ENCODE measurements at regions of chr14 and their contacts with region 1.

Region 1: GRCh38 chr14:20613094-20614037 is 22.2 kb upstream of the RNASE12 start:
- DNase-seq: peak; percentile 83
- H3K4me3 Mint-ChIP-seq: no peak overlapping the region
- H3K27ac Mint-ChIP-seq: no peak overlapping the region
- H3K4me1 Mint-ChIP-seq: peaks cover 14% of the 10 kb centered on the region
- H3K27me3 Mint-ChIP-seq: peaks cover 2% of the 10 kb centered on the region

Region 2: DNA sequence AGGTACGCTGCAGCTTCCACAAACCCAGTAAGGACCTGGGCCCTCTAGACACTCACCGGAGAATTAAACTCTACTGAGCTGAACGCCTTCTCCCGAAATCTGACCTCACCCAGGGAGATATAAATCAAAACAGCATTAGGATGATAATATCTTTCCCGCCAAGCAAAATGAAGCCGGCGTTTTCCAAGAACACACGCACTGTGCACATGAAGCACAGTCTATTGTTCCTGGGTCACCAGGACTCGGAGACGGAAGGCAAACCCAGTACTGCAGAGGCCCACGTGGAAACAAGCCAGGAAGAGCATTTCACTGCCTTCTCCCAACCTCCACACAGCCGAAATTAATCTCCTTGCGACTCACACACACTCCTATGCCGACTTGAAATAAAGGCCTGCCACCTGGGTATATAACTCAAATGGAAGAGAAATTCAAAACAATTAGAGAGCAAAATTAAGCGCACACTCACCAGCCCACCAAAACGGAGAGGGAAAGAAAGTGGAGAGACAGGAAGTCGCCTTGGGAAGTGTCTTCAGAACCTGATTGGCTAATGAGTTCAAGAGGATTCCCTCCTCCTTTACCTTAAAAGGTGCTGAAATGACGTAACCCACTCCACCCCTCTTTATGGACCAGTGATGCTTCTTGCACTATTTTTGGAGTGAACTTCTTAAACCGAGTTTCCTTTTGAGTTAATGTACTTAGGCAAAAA is 280.4 kb before region 1 on chr14 and contains the start of gene CCNB1IP1:
- intact Hi-C with region 1: loop called (anchors 1 kb)
- DNase-seq: peak; percentile 48
- H3K4me3 Mint-ChIP-seq: peak within 1 kb of the TSS; percentile 97
- H3K27ac Mint-ChIP-seq: peak within 1 kb of the TSS; percentile 88
- H3K4me1 Mint-ChIP-seq: peaks cover 45% of the 10 kb centered on the region
- H3K27me3 Mint-ChIP-seq: peaks cover 4% of the 10 kb centered on the region
- total RNA-seq, gene CCNB1IP1: 44.0 and 46.8 TPM in 2 replicates

Region 3: GRCh38 chr14:20413045-20413799 is 200.1 kb before region 1 on chr14 and contains the start of gene TEP1:
- intact Hi-C with region 1: loop called (anchors 1 kb)
- DNase-seq: peak; percentile 64
- H3K4me3 Mint-ChIP-seq: peak within 1 kb of the TSS; percentile 97
- H3K27ac Mint-ChIP-seq: peak within 1 kb of the TSS; percentile 91
- H3K4me1 Mint-ChIP-seq: peaks cover 26% of the 10 kb centered on the region
- H3K27me3 Mint-ChIP-seq: no peaks in the 10 kb centered on the region
- total RNA-seq, gene TEP1: 32.7 and 33.6 TPM in 2 replicates

Region 4: GRCh38 chr14:20469242-20469889 is 144.0 kb before region 1 on chr14 and contains the start of gene PNP:
- intact Hi-C with region 1: loop called (anchors 2 kb)
- DNase-seq: peak; percentile 86
- H3K4me3 Mint-ChIP-seq: peak within 1 kb of the TSS; percentile 94
- H3K27ac Mint-ChIP-seq: peak within 1 kb of the TSS; percentile 96
- H3K4me1 Mint-ChIP-seq: peaks cover 32% of the 10 kb centered on the region
- H3K27me3 Mint-ChIP-seq: peaks cover 4% of the 10 kb centered on the region
- total RNA-seq, gene PNP: 133 and 137 TPM in 2 replicates

Region 5: DNA sequence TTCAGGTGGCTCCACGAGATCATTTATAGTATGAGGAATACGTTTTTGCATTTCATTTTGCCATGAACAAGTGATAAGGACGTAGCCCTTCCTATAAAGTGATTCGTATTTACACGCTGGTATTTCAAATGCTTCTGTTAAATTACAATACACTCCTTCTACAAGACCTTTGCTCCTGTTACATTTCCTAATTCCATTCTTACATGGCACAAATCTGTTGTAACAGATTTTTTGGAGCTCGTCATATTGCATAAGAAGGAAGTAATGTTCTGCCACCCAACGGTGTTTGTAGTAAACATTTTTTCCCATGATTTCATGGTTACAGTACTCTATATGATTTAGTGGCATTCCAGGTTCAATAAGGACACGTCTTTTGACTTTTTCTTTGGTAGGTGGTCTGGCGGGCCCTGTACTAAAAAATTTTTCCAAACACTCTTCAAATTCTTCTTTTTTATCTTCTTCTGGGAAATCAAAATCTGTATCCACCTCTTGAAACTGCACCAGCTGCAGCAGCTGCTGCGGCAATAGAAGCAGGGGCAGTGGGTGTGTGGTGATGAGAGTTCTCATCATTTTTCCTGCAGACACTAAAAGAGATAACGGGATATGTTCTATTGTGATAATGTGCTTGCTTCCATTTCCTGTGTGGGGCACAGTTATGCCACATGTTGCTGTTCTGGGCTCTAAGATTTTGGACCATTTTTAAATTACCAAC is 56.7 kb before region 1 on chr14:
- intact Hi-C with region 1: no loop called
- DNase-seq: no peak
- H3K4me3 Mint-ChIP-seq: no peak overlapping the region
- H3K27ac Mint-ChIP-seq: no peak overlapping the region
- H3K4me1 Mint-ChIP-seq: no peaks in the 10 kb centered on the region
- H3K27me3 Mint-ChIP-seq: peaks cover 2% of the 10 kb centered on the region

Region 6: DNA sequence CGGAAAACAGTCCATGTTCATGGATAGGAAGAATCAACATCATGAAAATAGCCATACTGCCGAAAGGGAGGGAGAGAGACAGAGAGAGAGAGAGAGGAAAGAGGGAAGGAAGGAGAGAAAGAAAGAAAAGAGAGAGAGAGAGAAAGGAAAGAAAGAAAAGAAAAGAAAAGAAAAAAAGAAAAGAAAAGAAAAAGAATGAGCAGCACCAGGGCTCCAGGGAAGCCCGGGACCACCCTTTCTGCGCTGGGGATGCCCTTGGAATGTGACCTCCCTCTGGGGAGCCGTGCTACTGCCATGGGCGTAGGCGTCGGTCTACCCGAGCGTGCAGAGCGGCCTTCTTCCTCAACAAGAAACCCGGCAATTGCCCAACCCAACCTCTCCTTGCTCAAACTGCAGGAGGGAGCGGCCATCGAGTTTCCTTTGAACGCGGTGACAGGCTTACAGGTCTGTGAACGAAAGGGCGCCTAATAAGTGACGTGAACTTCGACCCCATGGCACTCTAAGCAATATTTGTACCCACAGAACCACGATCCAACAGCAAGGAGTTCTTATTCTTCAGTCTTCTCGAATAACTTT is 11.2 kb after region 1 on chr14:
- intact Hi-C with region 1: loop called (anchors 1 kb)
- DNase-seq: no peak
- H3K4me3 Mint-ChIP-seq: peak overlapping the region; percentile 80
- H3K27ac Mint-ChIP-seq: peak overlapping the region; percentile 13
- H3K4me1 Mint-ChIP-seq: peaks cover 57% of the 10 kb centered on the region
- H3K27me3 Mint-ChIP-seq: peaks cover 48% of the 10 kb centered on the region

Region 7: DNA sequence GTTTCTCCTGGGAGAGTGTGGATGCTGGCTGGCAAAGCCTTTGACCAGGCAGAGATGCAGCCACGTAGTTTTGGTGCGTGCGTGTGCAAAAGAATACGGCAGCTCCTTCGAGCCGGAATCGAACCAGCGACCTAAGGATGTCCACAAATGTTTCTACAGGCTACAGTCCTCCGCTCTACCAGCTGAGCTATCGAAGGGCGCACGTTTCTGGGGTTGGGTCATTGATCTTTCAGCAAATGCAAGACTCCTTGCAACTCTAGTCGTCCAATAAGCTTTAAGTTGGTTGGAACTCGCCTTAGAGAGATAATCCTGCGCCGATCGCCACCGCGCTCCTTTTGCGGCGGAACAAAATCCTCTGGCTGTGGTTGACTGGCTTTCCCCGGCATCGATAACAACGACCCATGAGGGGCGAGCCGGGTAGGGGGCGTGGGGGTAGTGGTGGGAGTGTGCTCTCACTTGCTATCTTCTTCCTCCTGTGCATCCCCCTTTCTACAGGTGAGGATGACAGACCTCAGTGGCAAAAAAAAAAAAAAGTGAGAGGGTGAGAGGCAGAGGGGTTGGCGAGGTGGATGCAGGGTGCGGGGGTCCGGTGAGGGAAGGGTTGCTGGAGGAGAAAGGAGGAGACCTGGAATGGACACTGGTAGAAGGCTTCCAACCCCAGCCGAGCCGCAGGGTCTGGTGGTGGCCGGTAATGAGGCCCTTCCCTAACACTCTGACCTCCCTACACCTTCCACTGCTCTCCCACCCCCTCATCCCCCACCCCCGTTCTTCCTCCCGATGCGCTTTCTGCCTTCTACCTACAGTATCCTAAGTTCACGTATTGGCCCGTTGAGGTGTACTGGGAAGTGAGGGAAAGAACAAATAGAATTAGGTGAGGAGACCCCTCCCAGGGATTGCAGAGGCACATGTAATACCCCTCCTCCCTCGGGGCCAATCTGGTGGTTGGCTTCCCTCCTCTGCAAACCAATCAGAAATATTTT is 39.9 kb after region 1 on chr14:
- intact Hi-C with region 1: loop called (anchors 1 kb)
- DNase-seq: peak; percentile 53
- H3K4me3 Mint-ChIP-seq: peak overlapping the region; percentile 63
- H3K27ac Mint-ChIP-seq: no peak overlapping the region
- H3K4me1 Mint-ChIP-seq: peaks cover 24% of the 10 kb centered on the region
- H3K27me3 Mint-ChIP-seq: peaks cover 57% of the 10 kb centered on the region

Region 8: GRCh38 chr14:20690848-20691523 is 77.6 kb after region 1 on chr14:
- intact Hi-C with region 1: loop called (anchors 1 kb)
- DNase-seq: peak; percentile 33
- H3K4me3 Mint-ChIP-seq: no peak overlapping the region
- H3K27ac Mint-ChIP-seq: no peak overlapping the region
- H3K4me1 Mint-ChIP-seq: peaks cover 30% of the 10 kb centered on the region
- H3K27me3 Mint-ChIP-seq: peaks cover 2% of the 10 kb centered on the region

Measured in activated T-helper 2 cell treated with anti-CD3 and anti-CD28 coated beads, Interferon-gamma antibody, Interleukin-2, Interleukin-4, amounts not matched to agents 10 μg/mL and 5 μg/mL and 100 μg/mL, durations not matched to agents 14 hours and 24 hours and 36 hours (primary cell).